Motor neuron (in vitro differentiated cells): ENCODE measurements at regions of chr3 and their contacts with region 1.

Region 1: DNA sequence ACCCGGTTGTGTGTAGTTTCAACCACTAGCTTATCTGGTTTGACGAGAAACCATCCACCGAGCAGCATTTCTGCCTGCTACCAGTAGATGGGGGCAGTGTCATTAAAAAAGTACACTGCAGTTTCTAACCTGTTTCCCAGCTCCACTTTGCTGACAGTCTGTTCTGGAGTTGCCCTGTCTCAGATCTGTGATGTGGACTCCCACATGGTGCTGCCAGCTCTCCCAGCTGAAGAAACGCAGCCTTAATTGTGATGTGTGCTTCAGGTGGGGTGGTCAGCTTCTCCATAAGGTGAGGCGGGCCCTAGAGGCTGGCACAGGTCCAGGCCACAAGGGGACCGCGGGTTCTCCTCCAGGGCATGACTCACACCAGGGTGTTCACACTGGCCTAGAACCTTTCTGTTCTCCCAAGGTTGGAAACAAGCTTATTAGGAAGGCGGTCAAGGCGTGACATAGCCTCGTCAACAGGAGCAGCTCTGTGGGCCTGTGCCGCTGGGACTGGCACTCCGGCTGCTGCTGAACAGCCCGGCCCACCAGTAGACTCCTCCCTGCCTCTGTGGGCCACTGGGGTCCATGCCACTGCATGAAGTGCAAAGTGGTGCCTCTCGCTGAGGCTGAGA is 2.9 kb upstream of the FAM43A start:
- ATAC-seq: peak; percentile 41 to 71 (median 52)
- H3K4me3 ChIP-seq: no peak overlapping the region
- H3K27ac ChIP-seq: no peak overlapping the region
- H3K4me1 ChIP-seq: peaks cover 4 to 5% of the 10 kb centered on the region in 2 donors

Region 2: DNA sequence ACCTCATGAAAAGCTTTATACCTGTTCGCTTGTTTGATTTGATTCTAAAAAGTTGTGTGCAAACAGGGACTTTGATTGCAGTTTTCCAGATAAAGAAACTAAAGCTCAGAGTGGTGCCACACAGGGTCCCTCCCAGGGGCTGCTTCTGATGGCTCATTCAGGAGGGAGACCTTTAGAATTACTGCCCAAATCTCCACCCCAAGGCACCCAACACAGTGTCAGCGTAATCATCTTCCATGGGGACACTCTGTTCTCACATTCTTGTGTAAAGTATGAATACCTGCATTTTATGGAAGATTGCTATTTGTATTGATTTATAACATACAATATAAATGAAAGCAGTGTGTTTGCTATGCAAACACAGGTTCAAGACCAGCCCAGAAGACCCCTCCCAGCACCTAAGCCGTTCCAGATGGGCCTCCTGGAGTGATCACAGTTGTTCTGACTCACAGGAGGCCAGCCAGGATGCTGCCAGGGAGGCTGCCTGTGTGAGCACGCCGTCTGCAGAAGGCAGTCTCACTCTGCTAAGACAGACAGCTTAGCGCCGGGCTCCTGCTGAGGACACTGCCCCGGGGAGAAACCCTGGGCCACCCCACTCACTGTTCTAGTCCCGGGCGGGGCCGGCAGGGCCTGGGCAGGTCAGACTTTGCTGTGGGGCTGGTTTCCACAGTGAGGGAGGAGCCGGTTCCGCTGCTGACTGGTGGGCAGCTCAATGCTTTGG is 188.5 kb after region 1 on chr3:
- in situ Hi-C with region 1: loop called in 1 of 9 experiments (anchors 25 kb)
- ATAC-seq: peak; percentile 82 to 100 (median 98)
- H3K4me3 ChIP-seq: no peak overlapping the region
- H3K27ac ChIP-seq: no peak overlapping the region
- H3K4me1 ChIP-seq: peaks cover 5 to 14% of the 10 kb centered on the region in 2 donors

Region 3: DNA sequence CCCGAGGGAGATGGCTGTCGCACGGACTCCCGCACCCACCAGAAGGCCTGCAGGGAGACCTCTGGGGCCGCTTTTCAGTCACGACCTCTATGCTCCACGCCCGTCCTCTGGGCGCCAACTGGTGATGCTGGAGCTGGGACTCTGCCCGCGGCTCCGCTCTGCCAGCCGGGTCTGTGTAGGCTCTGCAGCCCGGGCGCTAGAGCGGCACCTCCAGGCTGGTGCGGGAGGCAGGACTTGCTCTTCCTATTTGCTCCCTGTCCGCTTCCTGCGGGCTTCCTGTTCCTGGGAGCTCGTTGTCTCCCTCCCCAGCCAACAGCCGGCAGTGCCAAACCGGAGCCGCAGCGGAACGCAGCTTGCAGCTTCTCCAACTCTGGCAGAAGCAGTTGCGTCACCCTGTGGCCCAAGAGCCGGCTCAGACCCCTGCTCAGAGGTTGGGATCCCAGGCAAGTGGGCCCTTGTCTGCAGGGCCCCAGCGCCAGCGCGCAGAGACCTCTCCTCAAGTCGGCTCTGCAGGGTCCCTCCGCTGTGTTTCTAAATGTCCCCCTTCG is 302.3 kb after region 1 on chr3:
- in situ Hi-C with region 1: loop called in 1 of 9 experiments (anchors 25 kb)
- ATAC-seq: peak in 2 of 8 experiments; percentile 99
- H3K4me3 ChIP-seq: no peak overlapping the region
- H3K27ac ChIP-seq: no peak overlapping the region
- H3K4me1 ChIP-seq: no peaks in the 10 kb centered on the region

Region 4: DNA sequence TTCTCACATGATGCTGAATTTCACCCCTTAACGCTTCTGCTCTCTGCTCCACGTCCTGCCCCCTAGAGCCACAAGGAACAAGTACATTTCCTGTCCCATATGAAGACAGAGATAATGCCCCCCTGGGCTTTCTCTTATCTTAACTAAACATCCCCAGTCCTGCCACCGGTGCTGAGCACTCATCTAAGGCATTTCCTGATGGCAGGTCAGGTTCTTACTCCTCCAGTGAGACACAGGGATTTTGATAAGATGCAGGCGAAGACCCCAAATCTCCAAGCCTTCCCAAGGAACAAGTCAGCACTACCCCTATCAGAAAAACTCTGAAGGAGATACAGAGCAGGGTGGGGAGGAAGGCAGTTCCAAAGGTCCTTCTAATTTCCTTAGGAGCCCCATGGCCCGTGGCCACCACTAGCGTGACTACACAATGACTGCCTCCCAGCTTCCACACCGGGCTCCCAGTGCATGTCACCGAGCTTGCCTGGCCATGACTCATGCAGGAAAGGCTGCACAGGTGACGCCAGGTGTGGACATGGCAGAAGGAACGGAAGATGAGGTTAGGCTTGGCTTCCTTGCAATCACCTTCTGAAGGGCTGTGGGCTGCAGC is 435.3 kb after region 1 on chr3:
- in situ Hi-C with region 1: loop called in 8 of 9 experiments (anchors 10 to 25 kb)
- ATAC-seq: no peak
- H3K4me3 ChIP-seq: no peak overlapping the region
- H3K27ac ChIP-seq: no peak overlapping the region
- H3K4me1 ChIP-seq: peaks cover 18 to 22% of the 10 kb centered on the region in 2 donors

Region 5: DNA sequence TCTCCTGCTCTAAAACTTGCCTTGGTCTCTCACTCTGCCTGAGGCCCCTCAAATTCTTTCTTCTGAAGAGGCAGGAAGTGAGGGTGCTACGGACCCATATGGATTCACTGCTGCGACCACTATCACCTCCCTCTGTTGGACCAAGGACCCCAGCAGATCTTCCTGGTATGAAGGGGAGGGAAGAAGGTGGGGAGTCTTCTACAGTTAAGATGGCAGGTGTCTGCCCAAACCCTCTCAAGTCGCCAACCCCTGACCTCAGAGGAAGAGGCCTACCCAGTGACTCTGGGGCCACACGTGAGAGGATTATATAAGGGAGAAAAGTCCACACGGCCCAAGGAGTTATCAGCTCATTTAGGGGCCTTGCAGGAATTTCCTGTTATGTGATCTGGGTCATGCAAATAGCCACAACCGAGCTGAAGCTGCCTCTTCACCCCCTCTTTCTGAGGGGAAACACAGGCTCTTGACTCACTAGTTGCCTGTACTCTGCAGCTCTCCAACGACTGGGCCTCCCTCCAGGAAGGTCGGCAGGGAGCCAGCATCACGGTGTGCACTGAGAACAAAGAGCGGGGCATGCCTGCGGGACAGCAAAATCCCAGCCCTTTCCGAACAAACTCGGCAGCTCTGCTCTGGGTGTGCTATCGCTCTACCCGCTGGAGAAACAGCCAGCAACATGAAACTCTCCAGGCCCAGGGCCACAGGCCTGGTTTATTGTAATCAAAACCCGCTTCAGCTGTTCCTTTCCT is 472.2 kb after region 1 on chr3:
- in situ Hi-C with region 1: no loop called
- ATAC-seq: peak; percentile 17 to 64 (median 48)
- H3K4me3 ChIP-seq: no peak overlapping the region
- H3K27ac ChIP-seq: no peak overlapping the region
- H3K4me1 ChIP-seq: peaks cover 45 to 67% of the 10 kb centered on the region in 2 donors

Region 6: DNA sequence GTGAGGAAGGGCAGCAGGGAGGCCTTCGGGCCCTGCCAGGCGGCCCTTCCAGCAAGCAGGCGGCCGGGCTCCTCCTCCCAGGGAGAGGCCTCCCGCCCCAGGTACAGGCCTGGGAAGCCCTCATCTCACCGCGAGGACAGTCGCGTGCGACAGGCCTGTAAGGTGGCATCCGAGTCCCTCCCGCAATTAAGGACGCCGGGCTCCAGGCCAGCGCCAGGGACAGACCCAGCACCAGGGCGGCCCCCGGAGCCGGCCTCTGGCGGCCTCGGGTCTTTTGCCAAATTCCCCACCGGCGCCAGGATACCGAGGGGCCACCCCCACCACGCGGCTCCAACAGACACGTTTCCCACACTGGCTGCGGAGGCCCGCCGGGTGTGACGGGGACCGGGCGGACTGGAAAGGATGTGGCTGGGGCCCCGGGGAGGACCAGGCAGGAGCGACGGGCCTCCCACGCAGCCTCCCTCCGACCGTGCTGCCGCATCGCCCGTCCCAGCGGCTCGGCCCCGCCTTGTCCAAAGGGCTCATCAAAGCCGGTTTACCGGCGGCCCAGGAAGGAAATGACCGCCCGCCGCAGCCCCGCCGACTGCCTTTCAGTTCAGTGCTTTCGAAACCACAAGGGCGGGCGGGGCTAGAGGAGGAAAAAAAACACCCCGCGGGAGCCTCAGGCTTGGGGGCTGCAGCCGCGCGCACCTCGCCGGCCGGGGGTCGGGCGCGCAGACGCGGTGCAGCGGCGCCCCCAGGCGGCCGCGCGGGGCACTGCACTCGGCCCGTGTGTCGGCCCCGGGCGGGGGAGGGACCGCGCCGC is 576.9 kb after region 1 on chr3:
- in situ Hi-C with region 1: loop called (anchors 10 to 25 kb)
- ATAC-seq: peak; percentile 75 to 91 (median 83)
- H3K4me3 ChIP-seq: peak overlapping the region; percentile 36 to 45 (median 38)
- H3K27ac ChIP-seq: peak overlapping the region; percentile 34 to 71
- H3K4me1 ChIP-seq: peaks cover 18 to 19% of the 10 kb centered on the region in 2 donors

Region 7: DNA sequence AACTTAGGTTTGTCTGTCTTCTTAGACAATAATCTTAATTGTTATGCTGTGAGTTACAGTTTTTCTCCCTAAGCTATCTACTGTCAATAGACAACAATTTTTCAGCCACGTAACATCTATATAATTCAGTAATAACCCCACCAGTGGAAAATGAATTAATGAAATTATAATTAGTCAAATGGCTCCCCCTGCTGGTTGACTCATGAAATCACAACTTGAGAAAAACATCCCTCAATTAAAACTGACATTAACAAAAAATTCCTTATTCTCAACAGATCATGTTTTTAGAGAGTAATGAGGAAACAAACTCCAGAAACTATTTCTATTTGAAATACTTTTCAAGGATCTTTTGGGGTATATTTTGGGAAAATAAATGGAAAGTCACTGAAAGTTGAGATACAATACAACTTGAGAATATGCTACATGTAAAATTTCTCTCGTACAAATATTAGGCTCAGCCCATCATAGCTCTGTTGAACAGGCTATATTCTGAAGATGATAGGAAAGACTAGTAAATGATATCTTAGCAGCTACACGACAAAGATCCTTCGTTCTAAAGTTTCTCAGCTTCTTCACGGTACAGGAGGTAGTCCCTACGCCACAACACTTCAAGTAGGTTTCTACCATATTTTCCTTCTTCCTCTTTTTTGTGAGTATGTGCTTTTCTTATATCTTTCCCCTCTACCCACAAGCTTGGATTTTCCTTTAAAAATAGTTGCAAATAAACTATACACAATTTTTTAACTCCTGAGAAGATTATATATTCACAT is 839.6 kb after region 1 on chr3:
- in situ Hi-C with region 1: loop called in 2 of 9 experiments (anchors 25 kb)
- ATAC-seq: no peak
- H3K4me3 ChIP-seq: no peak overlapping the region
- H3K27ac ChIP-seq: no peak overlapping the region
- H3K4me1 ChIP-seq: no peaks in the 10 kb centered on the region